ENCODE measurements at regions of chr20 and their contacts with region 1.

Region 1: GRCh38 chr20:5529331-5530148 is 212.8 kb upstream of the PROKR2 start:
- DNase-seq: peak; percentile 76 to 94 (median 86)
- H3K4me3 ChIP-seq: no peak overlapping the region
- H3K27ac ChIP-seq: peak overlapping the region in 3 of 5 donors; percentile 1 to 13 (median 10)
- H3K4me1 ChIP-seq: peaks cover 0 to 21% of the 10 kb centered on the region in 2 donors
- H3K27me3 ChIP-seq: no peaks in the 10 kb centered on the region
- CTCF ChIP-seq: peak; percentile 58 to 78 (median 70)
- POLR2A ChIP-seq: peak in 1 of 2 donors; percentile 13

Region 2: GRCh38 chr20:5353624-5354496 is 175.7 kb before region 1 on chr20:
- intact Hi-C with region 1: no loop called
- DNase-seq: no peak
- H3K4me3 ChIP-seq: no peak overlapping the region
- H3K27ac ChIP-seq: no peak overlapping the region
- H3K4me1 ChIP-seq: no peaks in the 10 kb centered on the region
- H3K27me3 ChIP-seq: no peaks in the 10 kb centered on the region
- CTCF ChIP-seq: no peak
- POLR2A ChIP-seq: no peak

Region 3: DNA sequence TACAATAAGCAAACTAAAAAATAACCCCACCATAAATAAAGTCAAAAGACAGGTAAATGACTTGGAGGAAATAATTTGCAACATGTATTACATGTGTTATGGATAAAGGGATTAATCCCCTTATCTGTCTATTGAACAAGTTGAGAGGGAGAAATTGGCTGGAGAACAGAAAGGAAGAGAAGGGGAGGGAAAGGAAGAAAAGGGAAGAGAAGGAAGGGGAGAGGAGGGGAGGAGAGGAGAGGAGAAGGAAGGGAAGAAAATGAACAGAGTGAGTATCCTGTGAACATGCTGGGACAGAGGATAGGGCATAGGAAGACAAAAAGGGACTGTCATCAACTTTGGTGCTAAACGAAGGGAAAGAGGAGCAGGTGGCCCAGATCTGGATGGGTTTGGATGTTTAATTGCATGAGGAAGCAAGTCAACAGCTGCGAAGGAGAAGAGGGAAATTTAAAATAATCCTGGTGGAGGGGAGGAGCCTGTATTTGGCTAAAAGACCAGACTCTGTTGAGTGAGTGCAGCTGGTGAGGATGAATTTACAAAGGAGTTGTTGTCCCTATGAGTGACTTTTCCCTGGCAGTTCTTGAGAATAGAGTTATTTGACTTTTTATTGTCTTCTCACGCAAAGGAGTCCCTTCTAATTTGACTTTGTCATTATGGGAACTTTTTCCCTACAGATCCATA is 206.4 kb after region 1 on chr20:
- intact Hi-C with region 1: no loop called
- DNase-seq: no peak
- H3K4me3 ChIP-seq: no peak overlapping the region
- H3K27ac ChIP-seq: peak overlapping the region in 1 of 5 donors; percentile 10
- H3K4me1 ChIP-seq: peaks cover 15 to 16% of the 10 kb centered on the region in 2 donors
- H3K27me3 ChIP-seq: no peaks in the 10 kb centered on the region
- CTCF ChIP-seq: no peak
- POLR2A ChIP-seq: no peak

Region 4: GRCh38 chr20:5788385-5788895 is 258.9 kb after region 1 on chr20:
- intact Hi-C with region 1: loop called in 1 of 2 experiments (anchors 5 kb)
- DNase-seq: peak; percentile 84 to 95 (median 86)
- H3K4me3 ChIP-seq: no peak overlapping the region
- H3K27ac ChIP-seq: no peak overlapping the region
- H3K4me1 ChIP-seq: peaks cover 21 to 22% of the 10 kb centered on the region in 2 donors
- H3K27me3 ChIP-seq: no peaks in the 10 kb centered on the region
- CTCF ChIP-seq: peak; percentile 90 to 96 (median 94)
- POLR2A ChIP-seq: no peak

Region 5: GRCh38 chr20:6074145-6074561 is 544.6 kb after region 1 on chr20:
- intact Hi-C with region 1: loop called in 1 of 2 experiments (anchors 5 kb)
- DNase-seq: peak in 3 of 7 donors; percentile 23 to 61 (median 33)
- H3K4me3 ChIP-seq: no peak overlapping the region
- H3K27ac ChIP-seq: peak overlapping the region in 4 of 5 donors; percentile 41 to 87 (median 54)
- H3K4me1 ChIP-seq: peaks cover 20 to 28% of the 10 kb centered on the region in 2 donors
- H3K27me3 ChIP-seq: no peaks in the 10 kb centered on the region
- CTCF ChIP-seq: peak in 4 of 6 experiments; percentile 20 to 53 (median 32)
- POLR2A ChIP-seq: no peak

Region 6: GRCh38 chr20:6081236-6081635 is 551.7 kb after region 1 on chr20:
- intact Hi-C with region 1: loop called (anchors 5 to 10 kb)
- DNase-seq: peak; percentile 80 to 96 (median 91)
- H3K4me3 ChIP-seq: no peak overlapping the region
- H3K27ac ChIP-seq: peak overlapping the region in 3 of 5 donors; percentile 71 to 88 (median 81)
- H3K4me1 ChIP-seq: peaks cover 16 to 20% of the 10 kb centered on the region in 2 donors
- H3K27me3 ChIP-seq: no peaks in the 10 kb centered on the region
- CTCF ChIP-seq: no peak
- POLR2A ChIP-seq: peak in 1 of 2 donors; percentile 36

Region 7: DNA sequence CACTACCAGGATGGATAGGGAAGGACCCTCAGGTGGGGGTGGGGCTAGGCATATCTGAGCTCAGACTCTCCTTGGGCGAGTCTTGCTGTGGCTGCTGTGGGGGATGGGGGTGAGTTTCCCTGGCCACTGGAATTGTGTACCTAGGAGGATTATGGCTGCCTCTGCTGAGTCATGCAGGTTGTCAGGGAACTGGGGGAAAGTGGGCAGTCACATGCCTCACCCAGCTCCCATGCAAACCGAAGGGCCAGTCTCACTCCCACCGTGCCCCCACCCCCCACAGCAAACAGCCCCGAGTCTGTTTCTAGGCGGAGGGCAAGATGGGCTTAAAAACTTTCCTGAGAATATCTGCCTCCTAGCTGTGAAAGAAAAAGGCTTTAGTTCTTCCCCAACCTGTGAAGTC is 803.6 kb after region 1 on chr20:
- intact Hi-C with region 1: no loop called
- DNase-seq: no peak
- H3K4me3 ChIP-seq: no peak overlapping the region
- H3K27ac ChIP-seq: no peak overlapping the region
- H3K4me1 ChIP-seq: no peaks in the 10 kb centered on the region
- H3K27me3 ChIP-seq: no peaks in the 10 kb centered on the region
- CTCF ChIP-seq: no peak
- POLR2A ChIP-seq: no peak